ENCODE measurements at regions of chr11 and their contacts with region 1.

Region 1: GRCh38 chr11:117443266-117444195 is 115.9 kb downstream of the CEP164 start:
- DNase-seq: peak; percentile 92
- H3K4me3 ChIP-seq: peak overlapping the region; percentile 8 to 9; a peak in 2 of 4 replicates
- H3K27ac ChIP-seq: peak overlapping the region in 1 of 2 experiments; percentile 99; a peak in 2 of 4 replicates
- H3K4me1 ChIP-seq: peaks cover 0 to 29% of the 10 kb centered on the region in 2 experiments; a peak in 2 of 4 replicates
- H3K27me3 ChIP-seq: peaks cover 22% of the 10 kb centered on the region; the same call in 1 of the 2 replicates
- CTCF ChIP-seq: peak; percentile 65
- EP300 ChIP-seq: peak in 1 of 2 experiments; percentile 31; a peak in 1 of 4 replicates
- RAD21 ChIP-seq: peak; percentile 96

Region 2: DNA sequence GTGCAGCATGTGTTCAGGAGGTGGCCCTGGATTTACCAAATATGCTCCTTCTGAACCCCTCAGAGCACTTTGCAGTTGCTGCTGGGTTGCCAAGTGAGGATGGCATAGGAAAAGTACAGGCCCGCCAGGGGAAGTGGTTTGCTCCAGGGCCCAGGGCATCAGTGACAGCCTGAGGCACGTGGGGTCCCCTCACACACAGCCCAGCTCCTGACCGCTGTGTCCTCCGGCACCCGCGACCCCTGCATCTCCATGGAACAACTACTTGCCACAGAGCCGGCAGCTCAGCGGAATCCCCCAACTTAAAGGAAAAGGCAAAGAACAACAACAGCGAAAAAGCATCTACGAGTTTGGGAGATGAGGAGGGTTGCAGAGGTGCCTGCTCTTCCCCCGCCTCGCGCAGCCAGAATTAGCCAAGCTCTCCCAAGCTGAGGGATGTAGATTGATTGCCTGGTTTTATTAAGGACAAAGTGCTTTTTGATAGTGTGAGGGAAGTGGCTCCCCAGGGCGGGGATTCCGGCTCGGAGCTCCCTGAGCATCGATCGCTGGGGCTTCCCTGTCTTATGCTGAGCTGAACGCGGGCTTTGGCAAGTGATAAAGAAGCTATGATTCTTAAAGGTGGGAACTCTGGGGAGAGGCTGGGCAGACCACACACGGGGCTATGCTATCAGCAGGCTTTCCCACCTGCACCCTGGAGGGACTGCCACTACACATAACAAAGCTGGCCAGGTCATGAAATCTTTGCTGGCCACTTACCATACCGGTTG is 58.7 kb after region 1 on chr11:
- CTCF ChIA-PET with region 1: interaction called, 108 read pairs
- POLR2A ChIA-PET with region 1: interaction called, 9 read pairs
- DNase-seq: no peak
- H3K4me3 ChIP-seq: no peak overlapping the region
- H3K27ac ChIP-seq: peak overlapping the region in 1 of 2 experiments; percentile 48; a peak in 1 of 4 replicates
- H3K4me1 ChIP-seq: peaks cover 0 to 53% of the 10 kb centered on the region in 2 experiments; a peak in 1 of 4 replicates
- H3K27me3 ChIP-seq: peaks cover 8% of the 10 kb centered on the region; the same call in 1 of the 2 replicates
- CTCF ChIP-seq: no peak
- EP300 ChIP-seq: no peak
- RAD21 ChIP-seq: no peak

Region 3: GRCh38 chr11:117538263-117539135 is 95.0 kb after region 1 on chr11:
- CTCF ChIA-PET with region 1: interaction called, 14 read pairs
- POLR2A ChIA-PET with region 1: no interaction called
- DNase-seq: peak; percentile 76
- H3K4me3 ChIP-seq: no peak overlapping the region
- H3K27ac ChIP-seq: peak overlapping the region in 1 of 2 experiments; percentile 51; a peak in 2 of 4 replicates
- H3K4me1 ChIP-seq: peaks cover 0 to 24% of the 10 kb centered on the region in 2 experiments; a peak in 1 of 4 replicates
- H3K27me3 ChIP-seq: peaks cover 7% of the 10 kb centered on the region; the same call in 1 of the 2 replicates
- CTCF ChIP-seq: no peak
- EP300 ChIP-seq: no peak
- RAD21 ChIP-seq: no peak

Region 4: GRCh38 chr11:117591316-117592039 is 147.9 kb after region 1 on chr11:
- CTCF ChIA-PET with region 1: interaction called, 14 read pairs
- POLR2A ChIA-PET with region 1: no interaction called
- DNase-seq: peak; percentile 73
- H3K4me3 ChIP-seq: no peak overlapping the region
- H3K27ac ChIP-seq: peak overlapping the region in 1 of 2 experiments; percentile 28; a peak in 2 of 4 replicates
- H3K4me1 ChIP-seq: peaks cover 0 to 26% of the 10 kb centered on the region in 2 experiments; a peak in 2 of 4 replicates
- H3K27me3 ChIP-seq: peaks cover 6% of the 10 kb centered on the region; the same call in 1 of the 2 replicates
- CTCF ChIP-seq: no peak
- EP300 ChIP-seq: 0 out of 4 replicates have a peak, but pooled peaks of 1 of the 2 experiments have one; percentile 39
- RAD21 ChIP-seq: no peak

Region 5: DNA sequence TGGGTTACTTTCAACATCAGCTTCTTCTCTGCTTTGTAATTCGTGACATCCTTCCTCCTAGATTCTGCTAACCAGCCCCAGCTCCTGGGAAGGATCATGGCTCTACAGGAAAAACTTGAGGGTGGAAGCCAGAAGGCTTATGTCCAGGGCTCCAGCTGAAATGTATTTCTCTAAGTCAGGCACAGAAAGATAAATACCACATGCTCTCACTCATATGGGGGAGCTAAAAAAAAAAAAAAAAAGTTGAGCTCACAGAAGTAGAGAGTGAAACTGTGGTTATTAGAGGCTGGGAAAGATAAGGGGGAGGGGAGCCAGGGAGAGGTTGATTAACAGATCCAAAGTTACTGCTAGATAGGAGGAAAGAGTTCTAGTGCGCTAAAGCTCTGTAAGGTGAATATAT is 278.6 kb after region 1 on chr11:
- CTCF ChIA-PET with region 1: interaction called, 20 read pairs
- POLR2A ChIA-PET with region 1: no interaction called
- DNase-seq: no peak
- H3K4me3 ChIP-seq: no peak overlapping the region
- H3K27ac ChIP-seq: no peak overlapping the region; a peak in 1 of 4 replicates
- H3K4me1 ChIP-seq: peaks cover 0 to 37% of the 10 kb centered on the region in 2 experiments; a peak in 2 of 4 replicates
- H3K27me3 ChIP-seq: 0 out of 2 replicates have a peak, but pooled peaks cover 4% of the 10 kb centered on the region
- CTCF ChIP-seq: no peak
- EP300 ChIP-seq: 0 out of 4 replicates have a peak, but pooled peaks of 1 of the 2 experiments have one; percentile 9
- RAD21 ChIP-seq: no peak

Region 6: DNA sequence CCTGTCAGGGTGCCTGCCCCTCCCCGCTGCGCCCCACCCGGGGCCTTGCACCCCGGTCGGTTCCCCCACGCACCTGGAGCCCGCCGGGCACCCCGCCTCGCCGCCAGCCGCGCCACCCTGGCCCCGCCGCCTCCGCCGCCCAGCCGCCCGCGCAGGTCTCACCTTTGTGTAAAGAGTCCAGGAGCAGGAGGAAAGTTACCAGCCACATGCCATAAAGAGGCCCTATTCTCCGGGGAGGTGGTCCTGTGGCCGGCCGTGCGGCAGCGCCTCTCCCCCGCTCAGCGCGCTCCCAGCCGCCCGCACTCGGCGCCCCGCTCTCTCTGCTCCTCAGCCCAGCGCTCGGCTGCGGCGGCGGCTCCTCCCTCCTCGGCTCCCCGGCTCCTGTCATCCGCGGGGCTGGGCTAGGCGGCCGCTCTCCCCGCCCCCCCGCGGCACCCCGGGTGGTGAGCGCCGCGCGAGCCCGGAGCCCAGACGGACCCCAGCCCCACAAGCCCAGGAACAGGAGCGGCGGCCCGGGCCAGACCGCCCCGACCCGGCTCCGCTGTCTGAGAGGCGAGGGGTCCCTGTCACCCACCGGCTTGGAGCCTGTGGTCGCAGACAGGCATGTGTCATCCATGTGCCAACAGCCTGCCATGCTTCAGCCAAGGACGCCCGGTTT is 353.5 kb after region 1 on chr11 and contains the start of gene DSCAML1:
- CTCF ChIA-PET with region 1: interaction called, 27 read pairs
- POLR2A ChIA-PET with region 1: no interaction called
- DNase-seq: peak; percentile 87
- H3K4me3 ChIP-seq: peak within 1 kb of the TSS in 1 of 2 experiments; percentile 34; a peak in 2 of 4 replicates
- H3K27ac ChIP-seq: no peak within 1 kb of the TSS
- H3K4me1 ChIP-seq: peaks cover 0 to 14% of the 10 kb centered on the region in 2 experiments; a peak in 1 of 4 replicates
- H3K27me3 ChIP-seq: peaks cover 35% of the 10 kb centered on the region
- CTCF ChIP-seq: no peak
- EP300 ChIP-seq: no peak
- RAD21 ChIP-seq: no peak
- polyA plus RNA-seq, gene DSCAML1: not detected in 2 replicates

Region 7: GRCh38 chr11:117946842-117947526 is 503.5 kb after region 1 on chr11:
- CTCF ChIA-PET with region 1: interaction called, 10 read pairs
- POLR2A ChIA-PET with region 1: no interaction called
- DNase-seq: peak; percentile 85
- H3K4me3 ChIP-seq: peak overlapping the region in 1 of 2 experiments; percentile 39; a peak in 1 of 4 replicates
- H3K27ac ChIP-seq: no peak overlapping the region
- H3K4me1 ChIP-seq: no peaks in the 10 kb centered on the region; a peak in 1 of 4 replicates
- H3K27me3 ChIP-seq: no peaks in the 10 kb centered on the region; the same call in 1 of the 2 replicates
- CTCF ChIP-seq: peak; percentile 96
- EP300 ChIP-seq: no peak
- RAD21 ChIP-seq: peak; percentile 99